ENCODE measurements at regions of chr18 and their contacts with region 1.

Region 1: DNA sequence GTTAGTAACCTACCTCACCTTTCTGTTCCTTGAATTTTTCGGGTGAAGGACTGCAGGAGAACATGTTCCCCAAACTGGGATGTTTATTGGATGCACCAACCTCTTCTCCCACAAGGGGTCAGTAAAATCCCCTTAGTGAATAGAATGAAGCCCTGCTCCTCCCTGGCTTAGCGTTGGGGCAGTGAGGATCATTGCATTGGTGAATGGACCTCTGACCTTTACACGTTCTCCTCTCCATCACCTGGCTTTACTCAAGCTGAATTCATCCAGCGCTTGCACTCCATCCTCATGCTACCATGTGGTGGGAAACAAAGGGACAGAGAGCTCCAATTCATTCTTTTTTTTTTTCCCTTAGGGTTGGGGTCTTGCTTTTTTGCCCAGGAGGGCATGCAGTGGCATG is 157.2 kb downstream of the MIB1 start:
- DNase-seq: peak; percentile 28 to 46
- ATAC-seq: peak; percentile 66

Region 2: GRCh38 chr18:21991081-21991581 is 93.3 kb after region 1 on chr18:
- intact Hi-C with region 1: no loop called
- DNase-seq: no peak
- ATAC-seq: peak; percentile 34

Region 3: GRCh38 chr18:22563098-22563707 is 665.4 kb after region 1 on chr18:
- intact Hi-C with region 1: loop called in 1 of 2 experiments (anchors 5 kb)
- DNase-seq: peak; percentile 7 to 30
- ATAC-seq: peak; percentile 89

Measured in left colon (tissue), 2 donors.